ENCODE measurements at regions of chrX and their contacts with region 1.

Region 1: DNA sequence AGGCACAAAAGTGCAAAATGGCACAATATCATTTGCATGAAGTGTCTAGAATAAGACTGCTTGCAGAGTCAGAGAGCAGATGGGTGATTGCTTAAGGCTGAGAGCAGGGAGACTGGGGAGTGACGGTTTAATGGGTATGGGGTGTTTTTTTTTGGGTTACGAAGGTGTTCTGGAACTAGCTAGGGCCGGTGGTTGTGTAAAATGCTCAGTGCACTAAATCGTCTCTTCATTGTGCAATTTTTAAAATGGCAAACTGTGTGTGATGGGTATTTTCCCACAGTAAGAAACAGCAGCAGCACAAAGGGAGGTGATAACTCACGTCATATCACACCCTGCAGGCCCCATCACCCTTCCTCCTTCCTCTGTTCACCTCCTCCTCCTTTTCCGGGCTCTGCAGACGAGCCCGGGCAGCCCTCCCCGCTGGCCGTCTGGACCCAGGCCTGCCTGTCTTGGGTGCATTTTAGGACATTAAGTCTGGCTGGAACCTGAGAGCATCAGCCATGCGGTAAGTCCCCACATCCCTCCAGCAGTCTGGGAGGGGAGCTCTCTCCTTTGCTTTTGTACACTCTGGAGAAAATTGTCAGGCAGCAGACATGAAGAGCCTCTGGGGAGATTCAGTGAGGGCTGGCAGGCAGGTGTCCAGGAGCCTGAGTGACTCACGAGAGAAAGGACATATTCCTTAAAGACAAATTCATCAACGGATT is 42.7 kb downstream of the ASMT start:
- DNase-seq: peak; percentile 18
- ATAC-seq: no peak
- H3K4me3 Mint-ChIP-seq: peak overlapping the region; percentile 80
- H3K27ac Mint-ChIP-seq: peak overlapping the region; percentile 81
- H3K4me1 Mint-ChIP-seq: peaks cover 27% of the 10 kb centered on the region
- H3K27me3 Mint-ChIP-seq: no peaks in the 10 kb centered on the region
- CTCF ChIP-seq: no peak

Region 2: GRCh38 chrX:1264556-1264955 is 393.0 kb before region 1 on chrX:
- CTCF ChIA-PET with region 1: no interaction called
- POLR2A ChIA-PET with region 1: no interaction called
- intact Hi-C with region 1: no loop called
- DNase-seq: no peak
- ATAC-seq: no peak
- H3K4me3 Mint-ChIP-seq: no peak overlapping the region
- H3K27ac Mint-ChIP-seq: no peak overlapping the region
- H3K4me1 Mint-ChIP-seq: peaks cover 10% of the 10 kb centered on the region
- H3K27me3 Mint-ChIP-seq: peaks cover 2% of the 10 kb centered on the region
- CTCF ChIP-seq: no peak

Region 3: GRCh38 chrX:1767025-1767424 is 109.5 kb after region 1 on chrX:
- CTCF ChIA-PET with region 1: no interaction called
- POLR2A ChIA-PET with region 1: no interaction called
- intact Hi-C with region 1: no loop called
- DNase-seq: no peak
- ATAC-seq: no peak
- H3K4me3 Mint-ChIP-seq: no peak overlapping the region
- H3K27ac Mint-ChIP-seq: no peak overlapping the region
- H3K4me1 Mint-ChIP-seq: peaks cover 3% of the 10 kb centered on the region
- H3K27me3 Mint-ChIP-seq: peaks cover 4% of the 10 kb centered on the region
- CTCF ChIP-seq: no peak

Region 4: GRCh38 chrX:2608638-2609430 is 951.3 kb after region 1 on chrX:
- CTCF ChIA-PET with region 1: no interaction called
- POLR2A ChIA-PET with region 1: no interaction called
- intact Hi-C with region 1: loop called (anchors 2 kb)
- DNase-seq: peak; percentile 84
- ATAC-seq: peak; percentile 97
- H3K4me3 Mint-ChIP-seq: peak overlapping the region; percentile 93
- H3K27ac Mint-ChIP-seq: peak overlapping the region; percentile 81
- H3K4me1 Mint-ChIP-seq: peaks cover 36% of the 10 kb centered on the region
- H3K27me3 Mint-ChIP-seq: no peaks in the 10 kb centered on the region
- CTCF ChIP-seq: no peak

Region 5: GRCh38 chrX:2696698-2697215 is 1039.2 kb after region 1 on chrX:
- CTCF ChIA-PET with region 1: no interaction called
- POLR2A ChIA-PET with region 1: no interaction called
- intact Hi-C with region 1: loop called (anchors 5 kb)
- DNase-seq: no peak
- ATAC-seq: peak; percentile 83
- H3K4me3 Mint-ChIP-seq: peak overlapping the region; percentile 61
- H3K27ac Mint-ChIP-seq: peak overlapping the region; percentile 83
- H3K4me1 Mint-ChIP-seq: peaks cover 98% of the 10 kb centered on the region
- H3K27me3 Mint-ChIP-seq: no peaks in the 10 kb centered on the region
- CTCF ChIP-seq: no peak